AG04450 (cell line): ENCODE measurements at regions of chr4 and their contacts with region 1.

Region 1: GRCh38 chr4:17810260-17811077 is at the starts of genes DCAF16 and NCAPG:
- DNase-seq: peak; percentile 98
- H3K4me3 ChIP-seq: peak within 1 kb of the TSS; percentile 90
- H3K27ac ChIP-seq: peak within 1 kb of the TSS; percentile 89
- H3K27me3 ChIP-seq: no peaks in the 10 kb centered on the region
- CTCF ChIP-seq: no peak
- polyA plus RNA-seq, gene DCAF16: 19.8 and 22.2 TPM in 2 replicates
- polyA plus RNA-seq, gene NCAPG: 5.3 and 9.1 TPM in 2 replicates

Region 2: DNA sequence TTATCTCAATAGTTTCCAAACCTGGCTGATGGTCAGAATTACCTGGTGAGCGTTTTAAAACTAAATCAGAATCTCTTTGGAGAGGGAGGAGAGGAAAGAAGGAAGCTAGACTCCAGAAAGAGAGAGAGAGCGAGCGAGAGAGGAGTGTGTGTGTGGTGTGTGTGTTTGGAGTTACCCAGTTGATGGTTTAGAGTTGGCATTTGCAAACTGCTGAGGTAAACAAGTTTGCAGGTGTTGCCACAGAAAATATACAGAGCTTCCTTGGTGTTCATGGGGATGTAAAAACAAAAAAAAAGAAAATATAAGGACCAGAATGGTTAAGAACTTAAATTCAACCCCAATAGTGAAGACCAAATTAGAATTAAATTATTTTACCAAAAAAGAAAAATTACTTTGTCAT is 259.9 kb before region 1 on chr4:
- CTCF ChIA-PET with region 1: interaction called, 98 read pairs
- POLR2A ChIA-PET with region 1: no interaction called
- DNase-seq: no peak
- H3K4me3 ChIP-seq: no peak overlapping the region
- H3K27ac ChIP-seq: no peak overlapping the region
- H3K27me3 ChIP-seq: peaks cover 10% of the 10 kb centered on the region
- CTCF ChIP-seq: no peak

Region 3: GRCh38 chr4:17797808-17798207 is 12.7 kb before region 1 on chr4:
- CTCF ChIA-PET with region 1: interaction called, 26 read pairs
- POLR2A ChIA-PET with region 1: interaction called, 3 read pairs
- DNase-seq: no peak
- H3K4me3 ChIP-seq: no peak overlapping the region
- H3K27ac ChIP-seq: no peak overlapping the region
- H3K27me3 ChIP-seq: no peaks in the 10 kb centered on the region
- CTCF ChIP-seq: no peak